H1 (cell line): ENCODE measurements at regions of chr5 and their contacts with region 1.

Region 1: DNA sequence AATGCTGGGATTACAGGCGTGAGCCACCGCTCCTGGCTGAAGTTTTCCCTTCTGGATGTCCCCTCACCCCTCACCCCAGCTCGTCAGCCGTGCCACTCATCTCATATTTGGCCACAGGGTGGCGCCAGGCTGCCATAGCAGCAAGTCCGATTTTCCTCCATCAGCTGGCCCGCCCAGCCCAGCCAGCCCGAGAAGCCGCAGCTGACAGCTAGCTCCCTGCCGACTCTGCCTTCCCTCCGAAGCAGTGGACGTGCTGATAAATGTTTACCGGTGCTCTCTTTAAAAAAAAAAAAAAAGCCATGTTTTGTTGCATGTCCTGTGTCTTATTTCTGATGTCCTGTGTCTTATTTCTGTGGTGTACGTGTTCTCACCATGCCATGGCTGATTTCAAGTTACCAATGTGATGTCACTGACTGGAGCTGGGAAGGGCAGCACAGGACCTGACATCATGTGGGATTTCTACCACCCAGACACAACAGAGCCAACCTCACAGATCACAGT is 58.3 kb downstream of the PFDN1 start:
- DNase-seq: peak; percentile 84 to 95
- H3K4me3 ChIP-seq: no peak overlapping the region
- H3K27ac ChIP-seq: no peak overlapping the region; the same call in 1 of the 2 replicates
- H3K4me1 ChIP-seq: peaks cover 6 to 17% (median 12%) of the 10 kb centered on the region in 4 experiments; a peak in 6 of 7 replicates
- H3K27me3 ChIP-seq: no peaks in the 10 kb centered on the region
- CTCF ChIP-seq: peak in 2 of 3 experiments; percentile 88 to 91; a peak in 3 of 4 replicates
- EP300 ChIP-seq: no peak
- POLR2A ChIP-seq: no peak
- RAD21 ChIP-seq: peak; percentile 91 to 95

Region 2: GRCh38 chr5:140175367-140176030 is 69.1 kb before region 1 on chr5:
- CTCF ChIA-PET with region 1: interaction called, 41 read pairs
- POLR2A ChIA-PET with region 1: no interaction called
- DNase-seq: no peak
- H3K4me3 ChIP-seq: peak overlapping the region; percentile 60 to 93 (median 80)
- H3K27ac ChIP-seq: peak overlapping the region; percentile 65; the same call in 1 of the 2 replicates
- H3K4me1 ChIP-seq: peaks cover 0 to 4% (median 1%) of the 10 kb centered on the region in 4 experiments; a peak in 4 of 7 replicates
- H3K27me3 ChIP-seq: no peaks in the 10 kb centered on the region
- CTCF ChIP-seq: peak in 1 of 3 experiments; percentile 15; a peak in 1 of 4 replicates
- EP300 ChIP-seq: no peak
- POLR2A ChIP-seq: no peak
- RAD21 ChIP-seq: no peak

Region 3: DNA sequence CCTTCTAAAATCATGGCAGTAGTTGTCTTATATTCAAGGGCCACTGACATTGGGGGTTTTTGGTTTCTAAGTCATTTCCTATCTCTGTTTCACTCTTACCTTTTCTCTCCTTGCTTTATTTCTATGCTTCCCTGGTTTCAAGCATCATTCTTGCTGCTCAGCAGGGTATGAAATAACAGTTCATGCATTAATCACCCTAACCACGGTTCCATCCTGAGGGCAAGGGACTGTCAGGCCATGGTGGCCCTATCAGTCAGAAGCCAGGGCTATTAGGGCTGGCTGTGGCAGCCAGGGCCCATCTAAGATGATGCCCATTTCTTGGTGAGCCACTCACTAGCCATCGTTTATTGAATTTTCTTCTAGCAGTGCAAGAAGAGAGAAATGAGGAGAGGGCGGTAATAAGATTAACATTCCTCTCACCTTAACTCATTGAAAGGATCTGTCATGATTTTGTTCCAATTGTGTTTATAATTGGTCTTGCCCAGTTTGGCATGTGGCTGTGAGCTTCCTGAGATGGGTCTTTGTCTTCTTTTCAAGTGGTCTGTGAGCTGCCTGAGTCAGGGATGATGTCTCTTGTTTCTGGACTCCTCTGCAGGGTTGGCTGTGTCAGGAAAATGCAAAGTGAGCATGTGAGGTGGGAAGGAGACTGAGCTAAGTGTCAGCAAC is 24.4 kb before region 1 on chr5:
- CTCF ChIA-PET with region 1: interaction called, 99 read pairs
- POLR2A ChIA-PET with region 1: no interaction called
- DNase-seq: no peak
- H3K4me3 ChIP-seq: no peak overlapping the region
- H3K27ac ChIP-seq: no peak overlapping the region
- H3K4me1 ChIP-seq: peaks cover 0 to 4% (median 0%) of the 10 kb centered on the region in 4 experiments; a peak in 1 of 7 replicates
- H3K27me3 ChIP-seq: no peaks in the 10 kb centered on the region
- CTCF ChIP-seq: no peak
- EP300 ChIP-seq: no peak
- POLR2A ChIP-seq: no peak
- RAD21 ChIP-seq: no peak

Region 4: DNA sequence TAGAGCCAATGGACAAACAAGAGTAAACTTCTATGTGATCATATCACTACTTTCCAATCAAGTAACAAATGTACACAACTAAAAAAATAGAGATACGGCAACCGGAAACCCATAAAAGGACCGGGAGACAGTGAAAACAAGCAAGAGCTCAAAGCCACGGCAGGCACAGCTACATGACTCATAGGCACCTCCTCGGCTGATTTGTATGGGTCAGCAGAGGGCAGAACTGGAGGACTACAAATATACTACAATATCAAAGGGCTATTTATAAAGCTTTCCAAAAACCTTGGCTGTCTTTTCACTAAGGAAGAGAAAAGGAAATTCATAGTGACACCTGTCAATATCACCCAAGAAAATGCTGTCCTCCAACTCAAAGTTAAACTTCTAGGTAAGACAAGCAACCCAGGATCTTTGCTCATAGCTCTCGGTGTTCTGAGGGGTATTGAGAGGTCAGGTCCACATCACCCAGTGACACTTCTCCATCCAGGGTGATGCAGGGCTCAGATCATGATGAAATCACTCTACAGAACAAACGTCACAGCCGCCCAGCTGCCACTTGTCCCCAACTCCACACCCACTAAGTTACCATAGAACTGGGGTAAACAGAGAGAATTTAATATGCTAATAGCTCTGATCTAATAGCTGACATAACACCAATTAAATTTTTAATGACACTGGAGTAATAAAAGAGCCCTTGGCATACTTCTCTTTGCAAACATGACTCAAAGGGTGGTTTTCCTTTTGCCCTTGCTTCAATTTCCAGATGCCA is 17.0 kb after region 1 on chr5:
- CTCF ChIA-PET with region 1: interaction called, 124 read pairs
- POLR2A ChIA-PET with region 1: interaction called, 3 read pairs
- DNase-seq: no peak
- H3K4me3 ChIP-seq: no peak overlapping the region
- H3K27ac ChIP-seq: no peak overlapping the region
- H3K4me1 ChIP-seq: peaks cover 0 to 2% (median 0%) of the 10 kb centered on the region in 4 experiments; a peak in 4 of 7 replicates
- H3K27me3 ChIP-seq: no peaks in the 10 kb centered on the region
- CTCF ChIP-seq: no peak
- EP300 ChIP-seq: no peak
- POLR2A ChIP-seq: no peak
- RAD21 ChIP-seq: no peak

Region 5: DNA sequence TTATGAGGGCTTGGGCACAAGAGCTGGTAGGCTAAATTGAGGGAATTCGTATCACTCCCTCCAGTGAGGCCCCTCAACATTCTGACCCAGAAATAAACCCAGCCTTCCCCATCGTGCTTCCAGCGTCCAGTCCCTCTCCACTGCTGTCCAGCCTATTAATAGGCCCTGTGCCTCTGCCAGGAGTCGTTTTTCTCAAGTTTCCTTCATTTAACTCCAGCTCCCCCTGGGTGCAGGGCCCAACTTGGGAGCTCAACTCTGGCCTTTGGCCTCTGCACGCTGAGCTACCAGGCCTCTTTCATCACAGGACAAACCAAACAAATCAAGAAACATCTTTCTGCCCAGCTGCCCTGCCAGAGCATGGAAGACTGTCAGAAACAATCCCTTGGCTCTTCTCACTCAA is 91.8 kb after region 1 on chr5:
- CTCF ChIA-PET with region 1: interaction called, 102 read pairs
- POLR2A ChIA-PET with region 1: interaction called, 7 read pairs
- DNase-seq: no peak
- H3K4me3 ChIP-seq: no peak overlapping the region
- H3K27ac ChIP-seq: no peak overlapping the region
- H3K4me1 ChIP-seq: no peaks in the 10 kb centered on the region
- H3K27me3 ChIP-seq: no peaks in the 10 kb centered on the region
- CTCF ChIP-seq: no peak
- EP300 ChIP-seq: no peak
- POLR2A ChIP-seq: no peak
- RAD21 ChIP-seq: no peak

Region 6: DNA sequence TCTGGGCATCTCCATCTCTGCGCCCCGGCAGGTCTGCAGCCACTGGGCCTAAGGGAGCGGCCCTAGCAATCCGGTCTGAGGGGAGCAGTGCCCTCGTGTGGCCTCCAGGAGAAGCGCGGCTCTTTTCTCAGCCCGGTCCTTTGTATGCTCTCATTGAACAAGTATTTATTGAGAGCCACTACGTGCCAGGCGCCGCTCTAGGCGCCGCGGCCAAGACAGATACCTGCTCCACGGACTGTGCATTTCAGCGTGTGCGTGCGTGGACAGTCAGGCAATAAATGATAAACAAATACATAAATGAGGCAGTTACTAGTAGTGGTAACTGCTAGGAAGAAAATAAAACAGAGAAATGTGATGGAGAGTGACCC is 113.1 kb after region 1 on chr5:
- CTCF ChIA-PET with region 1: interaction called, 676 read pairs
- POLR2A ChIA-PET with region 1: interaction called, 4 read pairs
- DNase-seq: peak; percentile 75 to 88
- H3K4me3 ChIP-seq: no peak overlapping the region
- H3K27ac ChIP-seq: no peak overlapping the region
- H3K4me1 ChIP-seq: peaks cover 0 to 5% (median 0%) of the 10 kb centered on the region in 4 experiments; a peak in 2 of 7 replicates
- H3K27me3 ChIP-seq: no peaks in the 10 kb centered on the region
- CTCF ChIP-seq: peak in 2 of 3 experiments; percentile 92 to 93; a peak in 3 of 4 replicates
- EP300 ChIP-seq: no peak
- POLR2A ChIP-seq: no peak
- RAD21 ChIP-seq: peak; percentile 76 to 85

Region 7: GRCh38 chr5:140432916-140433315 is 188.3 kb after region 1 on chr5:
- CTCF ChIA-PET with region 1: no interaction called
- POLR2A ChIA-PET with region 1: no interaction called
- DNase-seq: no peak
- H3K4me3 ChIP-seq: no peak overlapping the region
- H3K27ac ChIP-seq: no peak overlapping the region
- H3K4me1 ChIP-seq: no peaks in the 10 kb centered on the region
- H3K27me3 ChIP-seq: no peaks in the 10 kb centered on the region
- CTCF ChIP-seq: no peak
- EP300 ChIP-seq: no peak
- POLR2A ChIP-seq: no peak
- RAD21 ChIP-seq: no peak